CD14-positive monocyte (primary cell): ENCODE measurements at regions of chr10 and their contacts with region 1.

Region 1: DNA sequence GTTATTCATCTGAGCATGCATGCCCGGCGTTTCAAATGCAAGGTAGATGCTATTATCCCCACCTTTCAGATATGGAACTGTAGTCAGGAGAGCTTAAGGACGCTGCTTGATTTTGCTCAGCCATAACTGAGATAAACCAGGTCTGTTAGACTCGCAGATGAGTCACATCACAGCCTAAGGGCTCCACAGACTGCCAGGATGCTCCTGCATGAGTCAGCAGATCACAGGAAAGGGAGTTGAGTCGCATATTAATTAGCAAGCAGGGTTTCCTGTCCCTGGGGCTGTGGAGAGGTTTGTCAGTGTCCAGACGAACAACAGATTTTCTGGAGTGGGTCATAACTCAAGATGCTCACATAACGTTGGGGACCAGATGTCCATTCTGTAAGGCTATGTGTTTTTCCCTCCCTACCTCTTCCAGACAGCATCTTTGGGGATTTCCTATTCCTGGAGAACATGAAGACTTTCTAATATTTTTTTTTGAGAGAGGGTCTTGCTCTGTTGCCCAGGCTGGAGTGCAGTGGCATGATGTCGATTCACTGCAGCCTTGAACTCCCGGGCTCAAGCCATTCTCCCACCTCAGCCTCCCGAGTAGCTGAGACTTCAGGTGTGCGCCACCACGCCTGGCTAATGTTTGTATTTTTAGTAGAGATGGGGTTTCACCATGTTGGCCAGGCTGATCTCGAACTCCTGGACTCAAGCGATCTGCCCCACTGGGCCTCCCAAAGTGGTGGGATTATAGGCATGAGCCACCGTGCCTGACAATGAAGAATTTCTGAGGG is 36.7 kb downstream of the PFKFB3 start:
- DNase-seq: peak; percentile 91 to 97 (median 92)
- H3K4me3 ChIP-seq: no peak overlapping the region
- H3K4me3 Mint-ChIP-seq: peak overlapping the region in 1 of 2 donors; percentile 28
- H3K27ac ChIP-seq: peak overlapping the region in 1 of 2 donors; percentile 62
- H3K27ac Mint-ChIP-seq: peak overlapping the region; percentile 25 to 88 (median 82)
- H3K4me1 ChIP-seq: peaks cover 17 to 25% of the 10 kb centered on the region in 2 donors
- H3K4me1 Mint-ChIP-seq: peaks cover 24% of the 10 kb centered on the region
- H3K27me3 ChIP-seq: no peaks in the 10 kb centered on the region
- H3K27me3 Mint-ChIP-seq: peaks cover 0 to 2% (median 1%) of the 10 kb centered on the region in 3 donors
- CTCF ChIP-seq: no peak

Region 2: GRCh38 chr10:6269953-6270867 is 30.8 kb after region 1 on chr10:
- intact Hi-C with region 1: loop called in 1 of 2 experiments (anchors 5 kb)
- DNase-seq: peak; percentile 60 to 86 (median 82)
- H3K4me3 ChIP-seq: no peak overlapping the region
- H3K4me3 Mint-ChIP-seq: no peak overlapping the region
- H3K27ac ChIP-seq: peak overlapping the region in 1 of 2 donors; percentile 57
- H3K27ac Mint-ChIP-seq: peak overlapping the region in 6 of 7 donors; percentile 77 to 100 (median 88)
- H3K4me1 ChIP-seq: peaks cover 51 to 54% of the 10 kb centered on the region in 2 donors
- H3K4me1 Mint-ChIP-seq: peaks cover 60% of the 10 kb centered on the region
- H3K27me3 ChIP-seq: no peaks in the 10 kb centered on the region
- H3K27me3 Mint-ChIP-seq: peaks cover 0 to 10% (median 7%) of the 10 kb centered on the region in 3 donors
- CTCF ChIP-seq: no peak